ENCODE measurements at regions of chr1 and their contacts with region 1.

Region 1: GRCh38 chr1:32714277-32714676 is 11.7 kb upstream of the SYNC start:
- DNase-seq: no peak

Region 2: GRCh38 chr1:32223683-32224082 is 490.6 kb before region 1 on chr1:
- in situ Hi-C with region 1: no loop called
- DNase-seq: no peak

Region 3: DNA sequence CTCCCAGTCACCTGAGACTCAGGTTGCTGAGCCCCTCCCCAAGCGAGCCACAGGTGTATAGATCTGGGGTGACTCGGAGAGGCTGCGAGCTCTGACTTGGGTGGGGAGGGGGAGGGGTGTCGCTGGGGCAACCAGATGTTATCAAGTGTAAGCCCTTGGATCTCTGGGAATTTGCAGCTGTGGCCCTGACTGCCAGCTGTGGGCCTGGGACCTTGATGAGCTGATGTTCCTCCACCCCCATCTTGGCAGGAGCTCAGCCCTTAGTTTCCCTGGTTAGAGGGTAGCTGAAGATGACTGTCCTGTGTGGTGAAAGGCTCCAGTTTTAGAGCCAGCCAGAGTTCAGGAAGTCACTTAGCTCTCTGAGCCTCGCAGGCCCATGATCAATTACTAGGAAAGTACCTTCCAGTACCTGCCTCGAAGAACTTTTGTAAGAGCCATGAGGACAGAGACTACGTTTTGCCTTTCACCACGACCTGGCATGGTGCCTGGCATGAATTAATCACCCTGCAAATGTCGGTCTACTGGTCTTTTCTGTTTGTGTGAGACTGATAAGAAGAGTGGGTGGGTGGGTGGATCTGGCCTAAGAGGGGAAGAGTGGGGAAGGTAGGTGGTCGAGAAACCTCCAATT is 47.1 kb after region 1 on chr1:
- in situ Hi-C with region 1: loop called (anchors 5 kb)
- DNase-seq: no peak

Measured in G401 (cell line).